ENCODE measurements at regions of chrX and their contacts with region 1.

Region 1: DNA sequence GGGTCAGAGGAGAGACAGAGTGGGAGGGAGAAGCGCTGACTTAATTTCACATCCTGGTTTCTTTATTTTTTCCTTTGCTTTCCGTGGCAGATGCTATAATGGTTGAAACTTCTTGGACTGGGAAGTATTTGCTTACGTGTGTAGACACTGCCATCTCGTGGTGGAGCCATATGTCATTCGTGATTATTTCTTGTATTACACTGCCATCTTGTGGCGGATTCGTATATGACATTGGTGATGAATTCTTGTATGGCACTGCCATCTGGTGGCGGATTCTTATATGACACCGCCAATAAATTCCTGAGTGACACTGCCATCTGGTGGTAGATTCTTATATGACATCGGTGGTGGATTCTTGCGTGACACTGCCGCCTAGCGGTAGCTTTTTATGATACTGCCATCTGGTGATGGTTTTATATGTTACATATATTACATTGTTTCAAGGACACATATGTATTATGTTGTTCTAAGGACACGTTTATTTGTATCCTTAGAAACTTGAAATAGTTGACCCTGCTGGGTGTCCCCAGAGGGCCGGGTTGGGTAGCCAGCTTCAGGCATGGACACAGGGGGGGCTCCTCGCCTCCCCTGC is 37.3 kb upstream of the CLCN4 start:
- DNase-seq: peak; percentile 52
- CTCF ChIP-seq: peak; percentile 96

Region 2: GRCh38 chrX:9785944-9786797 is 333.3 kb before region 1 on chrX and contains the start of gene SHROOM2:
- in situ Hi-C with region 1: no loop called
- DNase-seq: no peak
- CTCF ChIP-seq: no peak

Region 3: DNA sequence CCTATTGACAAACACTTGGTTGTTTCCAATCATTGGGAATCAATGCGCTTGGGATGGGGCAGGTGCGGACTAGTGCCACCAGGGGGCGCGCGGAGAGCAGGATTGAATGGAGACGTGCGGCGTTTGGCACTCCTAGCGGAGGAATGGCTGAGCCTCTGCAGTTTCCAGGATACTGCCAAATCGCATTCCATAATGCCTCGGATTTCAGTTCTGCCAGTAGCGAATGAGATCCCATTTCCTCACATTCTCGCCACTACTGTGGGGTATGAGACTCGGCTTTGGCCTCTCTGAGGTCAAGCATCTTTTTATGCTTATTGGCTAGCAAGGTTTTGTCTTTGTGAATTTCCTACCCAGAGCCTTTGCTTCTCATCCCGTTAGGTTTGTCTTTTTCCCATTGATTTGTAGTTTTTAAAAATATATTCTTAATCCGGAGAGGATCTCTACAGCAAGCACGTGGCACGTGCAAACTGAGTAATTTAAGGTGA is 123.6 kb before region 1 on chrX:
- in situ Hi-C with region 1: loop called (anchors 5 kb)
- DNase-seq: peak; percentile 74
- CTCF ChIP-seq: peak; percentile 91

Region 4: GRCh38 chrX:10014462-10015356 is 104.8 kb before region 1 on chrX:
- in situ Hi-C with region 1: no loop called
- DNase-seq: peak; percentile 87
- CTCF ChIP-seq: no peak